Activated naive CD4-positive, alpha-beta T cell treated with anti-CD3 and anti-CD28 coated beads for 36 hours (primary cell): ENCODE measurements at regions of chr19 and their contacts with region 1.

Region 1: GRCh38 chr19:54523403-54523802 is 20.8 kb downstream of the LAIR2 start:
- DNase-seq: peak; percentile 83
- H3K4me3 Mint-ChIP-seq: no peak overlapping the region
- H3K27ac Mint-ChIP-seq: peak overlapping the region; percentile 59
- H3K4me1 Mint-ChIP-seq: peaks cover 52% of the 10 kb centered on the region
- H3K27me3 Mint-ChIP-seq: peaks cover 3% of the 10 kb centered on the region

Region 2: GRCh38 chr19:54062643-54063042 is 460.8 kb before region 1 on chr19:
- CTCF ChIA-PET with region 1: no interaction called
- intact Hi-C with region 1: no loop called
- DNase-seq: no peak
- H3K4me3 Mint-ChIP-seq: no peak overlapping the region
- H3K27ac Mint-ChIP-seq: no peak overlapping the region
- H3K4me1 Mint-ChIP-seq: no peaks in the 10 kb centered on the region
- H3K27me3 Mint-ChIP-seq: peaks cover 11% of the 10 kb centered on the region

Region 3: DNA sequence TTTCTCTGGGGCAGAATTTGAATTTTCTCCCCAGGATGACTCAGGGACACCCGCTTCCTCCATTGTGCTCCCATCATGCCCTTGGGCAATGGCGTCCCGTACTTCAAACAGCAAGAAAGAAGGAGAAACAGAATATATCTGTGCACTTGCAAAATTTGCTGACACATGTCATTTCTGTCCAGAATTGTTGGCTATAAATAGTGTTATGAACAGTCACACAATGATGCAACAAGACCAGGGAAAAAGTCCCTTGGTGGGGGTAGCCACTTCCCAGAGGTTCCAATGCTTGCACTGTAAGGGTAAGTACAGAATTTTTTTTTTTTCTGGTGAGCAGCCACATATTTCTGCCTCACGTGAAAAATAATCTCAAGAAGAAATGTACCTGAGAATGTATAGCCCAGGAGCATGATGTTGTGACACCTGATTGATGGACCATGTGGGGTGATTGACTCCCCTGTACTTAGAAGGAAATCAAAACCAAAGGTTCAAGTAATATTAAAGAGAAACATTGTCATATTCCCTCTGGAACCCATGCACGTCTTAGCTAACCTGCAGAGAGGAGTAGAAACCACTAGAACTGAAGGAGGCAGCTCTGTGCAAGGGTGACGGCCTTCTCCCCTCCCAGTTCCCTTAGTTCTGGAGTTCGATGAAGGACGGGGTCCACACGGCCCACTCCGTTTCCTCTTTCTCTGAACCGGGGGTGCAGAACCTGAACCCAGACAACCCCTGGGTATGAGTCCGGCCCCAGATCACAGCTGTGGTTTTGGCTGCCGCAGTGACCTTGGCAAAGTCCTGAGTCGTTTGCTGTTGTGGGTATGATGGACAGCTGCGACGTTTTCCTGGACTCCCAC is 149.4 kb before region 1 on chr19:
- CTCF ChIA-PET with region 1: no interaction called
- intact Hi-C with region 1: loop called (anchors 5 kb)
- DNase-seq: no peak
- H3K4me3 Mint-ChIP-seq: no peak overlapping the region
- H3K27ac Mint-ChIP-seq: no peak overlapping the region
- H3K4me1 Mint-ChIP-seq: peaks cover 75% of the 10 kb centered on the region
- H3K27me3 Mint-ChIP-seq: peaks cover 33% of the 10 kb centered on the region